ENCODE measurements at regions of chr19 and their contacts with region 1.

Region 1: DNA sequence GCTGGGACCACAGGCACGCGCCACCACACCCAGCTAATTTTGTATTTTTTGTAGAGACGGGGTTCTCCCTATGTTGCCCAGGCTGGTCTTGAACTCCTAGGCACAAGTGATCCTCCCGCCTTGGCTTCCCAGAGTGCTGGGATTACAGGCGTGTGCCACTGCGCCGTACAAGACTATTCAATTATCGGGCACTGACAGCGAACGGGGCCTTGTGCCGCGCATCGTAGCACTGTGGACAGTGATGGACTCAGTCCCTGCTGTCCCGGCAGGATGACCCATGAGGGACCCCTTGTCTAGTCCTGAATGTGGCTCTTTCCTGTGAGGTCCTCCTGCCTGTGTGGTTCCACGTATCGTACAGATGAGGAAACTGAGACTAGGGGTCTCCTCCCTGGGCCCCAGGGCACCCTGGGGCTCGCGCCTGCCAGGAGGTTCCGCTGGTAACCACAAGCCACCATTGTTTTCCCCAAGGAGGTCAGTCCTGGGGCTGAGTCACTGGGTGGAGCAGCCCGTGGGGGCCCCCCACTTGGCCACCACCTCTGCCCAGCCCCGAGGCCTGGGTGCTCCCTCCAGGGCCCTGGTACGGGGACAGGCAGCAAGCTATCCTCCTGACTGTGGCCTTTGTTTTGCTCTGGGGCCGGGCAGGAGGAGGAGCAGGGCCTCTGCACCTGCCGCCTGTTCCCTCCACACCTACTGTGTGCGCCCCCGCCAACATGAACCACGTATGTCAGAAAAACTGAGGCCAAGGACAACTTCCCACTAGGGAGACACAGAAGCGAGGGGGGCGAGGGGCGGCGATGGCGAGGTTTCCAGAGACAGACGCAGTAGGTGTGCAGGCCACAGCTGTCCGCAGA is 2.9 kb upstream of the TCF3 start:
- DNase-seq: peak; percentile 83 to 88
- H3K4me3 ChIP-seq: no peak overlapping the region
- H3K27ac ChIP-seq: peak overlapping the region; percentile 53
- H3K4me1 ChIP-seq: peaks cover 49% of the 10 kb centered on the region
- H3K27me3 ChIP-seq: no peaks in the 10 kb centered on the region
- CTCF ChIP-seq: no peak

Region 2: DNA sequence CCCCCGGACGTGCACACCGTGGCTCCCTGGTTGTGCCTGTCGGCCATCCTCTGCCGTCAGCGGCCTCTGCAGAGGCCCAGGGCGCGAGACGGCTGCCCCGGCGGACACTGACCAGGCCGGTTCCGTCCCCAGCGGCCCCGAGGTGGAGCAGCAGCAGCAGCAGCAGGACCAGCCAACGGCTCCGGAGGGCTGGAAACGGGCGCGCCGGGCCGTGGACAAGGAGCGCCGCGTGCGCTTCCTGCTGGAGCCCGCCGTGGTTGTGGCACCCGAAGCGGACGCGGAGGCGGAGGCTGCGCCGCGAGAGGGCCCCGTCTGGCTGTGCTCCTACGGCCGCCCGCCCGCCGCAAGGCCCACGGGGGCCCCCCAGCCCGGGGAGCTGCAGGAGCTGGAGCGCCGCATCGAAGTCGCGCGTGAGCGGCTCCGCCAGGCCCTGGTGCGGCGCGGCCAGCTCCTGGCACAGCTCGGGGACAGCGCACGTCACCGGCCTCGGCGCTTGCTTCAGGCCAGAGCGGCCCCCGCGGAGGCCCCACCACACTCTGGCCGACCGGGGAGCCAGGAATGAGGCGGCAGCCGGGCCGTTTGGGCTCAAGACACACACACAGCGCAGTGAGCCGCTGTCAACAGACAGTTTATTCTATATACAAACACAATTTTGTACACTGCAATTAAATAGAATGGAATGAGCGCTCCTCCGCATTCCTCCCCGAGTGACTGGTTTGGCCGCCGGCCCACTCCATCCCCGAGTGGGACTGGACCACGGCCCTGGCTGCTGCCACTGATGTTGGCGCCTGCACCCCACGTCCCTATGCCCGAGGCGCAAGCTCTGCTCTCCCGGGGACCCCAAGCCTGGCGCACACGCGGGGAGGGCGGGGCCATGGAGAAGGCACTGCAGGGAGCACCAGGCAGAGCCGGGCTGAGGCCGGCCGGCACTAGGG is 646.0 kb before region 1 on chr19:
- CTCF ChIA-PET with region 1: no interaction called
- POLR2A ChIA-PET with region 1: no interaction called
- intact Hi-C with region 1: no loop called
- DNase-seq: no peak
- H3K4me3 ChIP-seq: no peak overlapping the region
- H3K27ac ChIP-seq: no peak overlapping the region
- H3K4me1 ChIP-seq: no peaks in the 10 kb centered on the region
- H3K27me3 ChIP-seq: no peaks in the 10 kb centered on the region
- CTCF ChIP-seq: no peak

Region 3: DNA sequence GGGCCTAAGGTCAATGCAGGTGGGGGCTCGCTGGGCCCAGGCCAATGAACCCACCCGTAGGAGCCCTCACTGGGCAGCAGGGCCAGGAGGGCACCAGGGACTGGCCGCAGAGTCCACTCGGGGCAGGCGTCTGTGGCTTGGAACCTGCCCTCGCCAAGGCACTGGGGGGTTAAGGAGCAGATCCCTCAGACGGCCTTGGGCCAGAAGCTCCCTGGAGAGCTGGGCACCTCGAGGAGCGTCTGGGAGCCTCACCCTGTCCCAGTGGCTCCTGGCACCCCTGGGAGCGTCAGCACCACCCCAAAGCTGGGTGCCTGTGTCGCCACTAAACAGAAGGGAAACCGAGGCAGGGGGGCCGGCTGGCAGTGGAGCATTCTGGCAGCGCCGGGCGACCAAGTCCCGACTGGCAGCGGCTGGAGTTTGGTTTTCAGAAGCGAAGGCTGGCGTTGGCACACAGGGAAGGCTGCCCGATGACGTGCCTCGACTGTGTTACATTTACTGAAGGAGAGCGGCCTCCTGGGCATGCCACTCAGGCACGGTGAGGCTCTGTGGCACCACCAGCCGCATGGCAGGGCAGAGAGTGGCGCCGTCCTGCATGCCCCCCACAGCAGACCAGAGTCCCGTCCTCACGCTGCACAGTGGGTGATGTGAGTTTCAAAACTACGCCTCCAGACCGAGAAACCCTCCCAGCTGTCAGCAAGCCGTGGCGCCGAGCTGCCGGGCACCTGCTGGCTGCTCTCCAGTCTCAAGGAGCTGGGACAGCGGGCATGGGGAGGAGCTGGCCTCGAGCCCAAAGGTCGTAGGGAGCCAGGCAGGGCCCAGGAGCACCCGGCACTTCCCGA is 78.0 kb before region 1 on chr19:
- CTCF ChIA-PET with region 1: no interaction called
- POLR2A ChIA-PET with region 1: no interaction called
- intact Hi-C with region 1: no loop called
- DNase-seq: no peak
- H3K4me3 ChIP-seq: no peak overlapping the region
- H3K27ac ChIP-seq: no peak overlapping the region
- H3K4me1 ChIP-seq: peaks cover 6% of the 10 kb centered on the region; the same call in 1 of the 2 replicates
- H3K27me3 ChIP-seq: no peaks in the 10 kb centered on the region
- CTCF ChIP-seq: no peak

Region 4: DNA sequence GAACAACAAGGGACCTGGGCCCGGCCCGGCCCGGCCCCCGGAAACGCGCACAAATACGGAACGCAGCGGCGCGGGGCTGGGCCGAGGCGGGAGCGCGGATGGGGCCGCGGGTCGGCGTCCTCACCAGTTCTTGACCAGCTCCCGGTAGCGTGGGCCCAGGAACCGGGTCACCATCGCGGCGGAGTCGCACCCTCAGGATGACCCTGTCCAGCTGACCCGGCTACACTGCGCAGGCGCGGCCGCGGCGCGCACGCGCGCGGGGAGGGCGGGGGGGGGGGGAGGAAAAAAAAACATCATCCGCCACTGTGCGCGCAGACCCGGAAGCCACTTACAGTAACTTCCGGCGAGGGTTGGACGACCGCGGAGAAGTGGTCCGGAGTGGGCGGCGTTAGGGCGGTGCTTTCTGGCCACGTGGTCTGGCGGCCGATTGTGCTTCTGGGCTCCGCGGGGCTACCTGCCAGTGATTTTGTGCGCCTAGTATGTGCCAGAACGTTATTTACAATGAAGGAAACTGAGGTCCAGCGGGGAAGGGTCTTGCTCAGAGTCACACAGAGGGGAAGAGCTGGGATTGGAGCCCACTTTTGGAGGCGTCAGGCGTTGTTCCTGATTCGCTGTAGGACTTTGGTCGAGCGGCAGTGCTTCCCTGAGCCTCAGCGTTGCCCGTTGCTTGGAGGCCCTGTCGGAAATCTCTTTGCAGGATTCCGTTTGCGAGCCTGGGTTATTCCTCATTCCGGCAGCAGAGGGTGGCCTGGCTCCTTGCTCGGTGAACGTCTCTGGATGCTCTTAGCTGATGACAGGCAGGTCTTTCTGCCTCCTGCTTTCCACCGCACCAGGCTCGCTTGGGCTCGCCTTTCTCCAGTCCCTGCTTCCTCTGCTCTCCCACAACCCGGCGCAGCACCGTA is 49.9 kb before region 1 on chr19 and contains the start of gene UQCR11:
- CTCF ChIA-PET with region 1: no interaction called
- POLR2A ChIA-PET with region 1: no interaction called
- intact Hi-C with region 1: loop called (anchors 5 kb)
- DNase-seq: peak; percentile 86 to 92
- H3K4me3 ChIP-seq: peak within 1 kb of the TSS; percentile 92
- H3K27ac ChIP-seq: peak within 1 kb of the TSS; percentile 73
- H3K4me1 ChIP-seq: peaks cover 26% of the 10 kb centered on the region
- H3K27me3 ChIP-seq: no peaks in the 10 kb centered on the region
- CTCF ChIP-seq: peak; percentile 57; the same call in 1 of the 2 replicates
- total RNA-seq, gene UQCR11: 196 and 275 TPM in 2 replicates

Region 5: GRCh38 chr19:1633269-1633826 is 22.0 kb before region 1 on chr19:
- CTCF ChIA-PET with region 1: no interaction called
- POLR2A ChIA-PET with region 1: no interaction called
- intact Hi-C with region 1: no loop called
- DNase-seq: no peak
- H3K4me3 ChIP-seq: no peak overlapping the region
- H3K27ac ChIP-seq: no peak overlapping the region
- H3K4me1 ChIP-seq: no peaks in the 10 kb centered on the region
- H3K27me3 ChIP-seq: no peaks in the 10 kb centered on the region
- CTCF ChIP-seq: no peak

Region 6: DNA sequence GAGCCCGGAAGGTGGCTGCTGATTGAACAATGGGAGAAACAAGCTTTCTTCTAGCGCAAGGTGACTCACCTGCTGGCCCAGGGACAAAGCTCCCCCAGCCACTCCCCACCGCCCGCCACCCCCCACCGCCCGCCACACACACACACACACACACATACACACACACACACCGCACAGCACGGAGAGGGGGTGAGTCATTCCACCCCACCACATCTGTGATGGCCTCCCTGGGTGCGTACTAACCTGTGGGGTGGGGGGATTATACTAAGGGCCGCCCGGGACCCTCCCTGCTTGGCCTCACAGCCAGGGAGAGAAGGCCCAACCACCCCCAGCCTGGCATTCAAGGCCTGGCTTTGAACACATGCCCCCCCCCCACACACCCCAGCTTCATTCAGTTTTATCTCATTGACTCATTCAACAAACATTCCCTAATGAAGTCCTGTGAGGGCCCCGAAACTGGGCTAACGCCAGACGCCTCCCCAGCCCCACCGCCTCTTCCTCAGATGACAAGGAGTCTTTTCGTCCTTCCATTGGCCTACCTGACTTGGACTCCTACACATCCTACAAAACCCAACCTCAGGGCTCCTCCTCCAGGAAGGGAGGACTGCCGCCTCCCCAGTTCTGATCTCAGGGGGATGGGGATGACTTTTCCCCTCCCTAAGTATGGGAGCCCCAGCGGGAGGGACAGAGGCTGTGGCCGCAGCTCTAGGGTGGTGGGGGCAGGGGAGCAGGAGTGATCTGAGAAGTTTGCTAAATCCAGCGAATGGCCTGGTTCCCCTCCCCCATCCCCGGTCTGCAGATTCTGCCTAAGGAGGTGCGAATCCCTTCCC is 92.1 kb after region 1 on chr19:
- CTCF ChIA-PET with region 1: no interaction called
- POLR2A ChIA-PET with region 1: interaction called, 14 read pairs
- intact Hi-C with region 1: loop called (anchors 5 kb)
- DNase-seq: peak; percentile 83 to 97
- H3K4me3 ChIP-seq: peak overlapping the region; percentile 71
- H3K27ac ChIP-seq: peak overlapping the region; percentile 94
- H3K4me1 ChIP-seq: peaks cover 8% of the 10 kb centered on the region
- H3K27me3 ChIP-seq: no peaks in the 10 kb centered on the region
- CTCF ChIP-seq: no peak

Region 7: DNA sequence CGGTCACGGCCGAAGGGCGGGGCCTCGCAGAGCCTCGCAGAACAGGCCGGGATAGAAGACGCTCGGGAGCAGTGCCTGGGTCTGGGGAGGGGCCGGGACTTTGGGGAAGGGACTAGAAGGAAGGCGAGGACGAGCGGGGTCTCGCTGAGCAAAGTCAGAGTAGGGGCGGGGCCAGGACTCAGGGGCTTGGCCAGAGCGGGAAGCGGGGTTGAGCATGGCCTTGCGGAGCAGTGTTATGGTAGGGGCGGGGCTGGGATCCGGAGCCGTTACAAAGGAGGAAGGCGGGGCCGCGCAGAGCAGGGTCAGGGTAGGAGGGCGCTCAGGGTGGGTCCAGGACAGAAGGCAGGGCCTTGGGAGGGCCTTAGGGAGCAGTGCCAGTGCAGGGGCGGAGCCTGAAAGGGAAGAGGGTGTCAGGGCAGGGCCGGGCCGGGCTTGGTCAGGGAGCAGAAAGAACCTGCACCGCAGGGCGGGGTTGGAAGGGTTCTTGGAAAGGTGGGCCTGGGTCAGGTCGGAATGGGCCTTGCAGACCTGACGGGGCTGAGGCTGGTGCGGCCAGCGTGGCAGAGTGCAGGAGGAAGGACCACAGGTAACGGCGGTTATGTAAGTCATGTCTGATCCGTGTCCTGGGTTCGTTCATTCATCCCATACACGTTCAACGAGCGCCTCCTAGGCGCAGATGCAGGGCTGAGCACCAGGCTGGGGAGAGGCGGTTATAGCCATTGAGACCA is 157.3 kb after region 1 on chr19:
- CTCF ChIA-PET with region 1: interaction called, 17 read pairs
- POLR2A ChIA-PET with region 1: no interaction called
- intact Hi-C with region 1: no loop called
- DNase-seq: peak; percentile 79 to 94
- H3K4me3 ChIP-seq: peak overlapping the region; percentile 60
- H3K27ac ChIP-seq: no peak overlapping the region
- H3K4me1 ChIP-seq: peaks cover 4% of the 10 kb centered on the region; the same call in 1 of the 2 replicates
- H3K27me3 ChIP-seq: no peaks in the 10 kb centered on the region
- CTCF ChIP-seq: peak; percentile 68